Caco-2 (cell line): ENCODE measurements at regions of chr1 and their contacts with region 1.

Region 1: GRCh38 chr1:215076318-215076717 is 6.2 kb upstream of the KCNK2 start:
- DNase-seq: peak; percentile 46 to 56
- H3K4me3 ChIP-seq: no peak overlapping the region
- H3K4me3 Mint-ChIP-seq: no peak overlapping the region
- H3K27ac Mint-ChIP-seq: no peak overlapping the region
- H3K4me1 ChIP-seq: no peaks in the 10 kb centered on the region
- H3K4me1 Mint-ChIP-seq: no peaks in the 10 kb centered on the region
- H3K27me3 ChIP-seq: no peaks in the 10 kb centered on the region
- H3K27me3 Mint-ChIP-seq: peaks cover 11% of the 10 kb centered on the region
- CTCF ChIP-seq: peak in 1 of 2 experiments; percentile 46

Region 2: GRCh38 chr1:214808845-214809460 is 267.4 kb before region 1 on chr1:
- CTCF ChIA-PET with region 1: interaction called, 3 read pairs
- POLR2A ChIA-PET with region 1: no interaction called
- intact Hi-C with region 1: loop called (anchors 1 kb)
- DNase-seq: no peak
- H3K4me3 ChIP-seq: no peak overlapping the region
- H3K4me3 Mint-ChIP-seq: no peak overlapping the region
- H3K27ac Mint-ChIP-seq: no peak overlapping the region
- H3K4me1 ChIP-seq: no peaks in the 10 kb centered on the region
- H3K4me1 Mint-ChIP-seq: no peaks in the 10 kb centered on the region
- H3K27me3 ChIP-seq: no peaks in the 10 kb centered on the region
- H3K27me3 Mint-ChIP-seq: no peaks in the 10 kb centered on the region
- CTCF ChIP-seq: no peak

Region 3: GRCh38 chr1:214857716-214858115 is 218.6 kb before region 1 on chr1:
- CTCF ChIA-PET with region 1: no interaction called
- POLR2A ChIA-PET with region 1: no interaction called
- intact Hi-C with region 1: no loop called
- DNase-seq: no peak
- H3K4me3 ChIP-seq: no peak overlapping the region
- H3K4me3 Mint-ChIP-seq: no peak overlapping the region
- H3K27ac Mint-ChIP-seq: no peak overlapping the region
- H3K4me1 ChIP-seq: no peaks in the 10 kb centered on the region
- H3K4me1 Mint-ChIP-seq: no peaks in the 10 kb centered on the region
- H3K27me3 ChIP-seq: no peaks in the 10 kb centered on the region
- H3K27me3 Mint-ChIP-seq: no peaks in the 10 kb centered on the region
- CTCF ChIP-seq: no peak

Region 4: DNA sequence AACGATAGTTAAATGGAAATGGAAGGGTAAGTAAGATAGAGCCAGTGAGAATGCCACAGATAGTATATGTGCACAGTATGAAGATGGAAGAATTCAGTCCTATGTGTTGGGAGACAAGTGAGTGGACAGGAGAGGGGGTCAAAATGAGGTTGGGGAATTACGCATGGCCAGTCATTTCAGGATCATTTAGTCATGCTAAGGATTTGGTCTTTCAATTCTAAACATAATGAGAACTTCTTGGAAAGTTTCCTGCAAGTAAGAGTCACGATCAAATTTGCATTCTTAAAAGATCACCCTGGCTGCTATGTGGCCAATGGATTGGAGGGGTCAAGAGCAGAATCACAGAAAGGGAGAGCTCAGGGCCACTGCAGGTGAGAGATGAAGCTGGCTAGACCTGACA is 57.8 kb before region 1 on chr1:
- CTCF ChIA-PET with region 1: no interaction called
- POLR2A ChIA-PET with region 1: no interaction called
- intact Hi-C with region 1: no loop called
- DNase-seq: no peak
- H3K4me3 ChIP-seq: no peak overlapping the region
- H3K4me3 Mint-ChIP-seq: no peak overlapping the region
- H3K27ac Mint-ChIP-seq: no peak overlapping the region
- H3K4me1 ChIP-seq: no peaks in the 10 kb centered on the region
- H3K4me1 Mint-ChIP-seq: no peaks in the 10 kb centered on the region
- H3K27me3 ChIP-seq: no peaks in the 10 kb centered on the region
- H3K27me3 Mint-ChIP-seq: peaks cover 4% of the 10 kb centered on the region
- CTCF ChIP-seq: no peak